ENCODE measurements at regions of chr17 and their contacts with region 1.

Region 1: DNA sequence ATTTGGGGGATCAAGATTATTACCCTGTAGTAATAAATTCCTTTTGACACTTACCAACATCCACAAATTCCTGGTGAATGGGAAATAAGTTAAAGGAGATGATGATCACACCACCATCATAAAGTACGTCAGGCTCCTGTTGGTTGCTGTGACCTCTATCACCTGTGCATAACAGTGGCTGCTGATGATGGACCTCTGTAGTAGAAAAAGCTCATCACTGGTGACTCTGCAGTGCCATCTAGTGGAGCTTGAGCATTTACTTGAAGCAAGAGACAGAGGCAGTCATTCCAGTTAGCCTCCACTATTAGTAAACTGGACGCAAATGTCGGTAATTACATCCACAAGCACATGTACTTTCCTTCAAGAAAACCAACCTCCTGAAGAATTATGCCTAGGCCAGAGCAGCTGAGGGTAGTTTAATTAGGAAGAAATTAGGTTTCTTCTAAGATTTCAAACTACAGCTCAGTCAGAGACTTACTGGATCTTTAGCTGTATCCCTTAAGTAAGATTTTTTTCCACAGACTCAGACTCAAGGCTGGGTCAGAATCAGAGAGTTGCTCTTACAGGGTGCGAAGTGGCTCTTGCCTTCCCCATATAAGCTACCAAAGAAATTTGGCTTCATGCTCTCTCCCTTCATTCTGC is 39.3 kb downstream of the CYB561 start:
- DNase-seq: peak; percentile 86
- ATAC-seq: peak; percentile 81
- H3K4me3 ChIP-seq: no peak overlapping the region
- H3K4me3 Mint-ChIP-seq: no peak overlapping the region
- H3K27ac ChIP-seq: no peak overlapping the region
- H3K27ac Mint-ChIP-seq: no peak overlapping the region
- H3K4me1 ChIP-seq: no peaks in the 10 kb centered on the region
- H3K4me1 Mint-ChIP-seq: peaks cover 2% of the 10 kb centered on the region
- H3K27me3 ChIP-seq: no peaks in the 10 kb centered on the region
- H3K27me3 Mint-ChIP-seq: no peaks in the 10 kb centered on the region
- CTCF ChIP-seq: peak; percentile 91

Region 2: GRCh38 chr17:62671583-62672312 is 735.1 kb before region 1 on chr17:
- CTCF ChIA-PET with region 1: interaction called, 30 read pairs
- POLR2A ChIA-PET with region 1: no interaction called
- intact Hi-C with region 1: no loop called
- DNase-seq: no peak
- ATAC-seq: no peak
- H3K4me3 ChIP-seq: no peak overlapping the region
- H3K4me3 Mint-ChIP-seq: no peak overlapping the region
- H3K27ac ChIP-seq: no peak overlapping the region
- H3K27ac Mint-ChIP-seq: no peak overlapping the region
- H3K4me1 ChIP-seq: no peaks in the 10 kb centered on the region
- H3K4me1 Mint-ChIP-seq: no peaks in the 10 kb centered on the region
- H3K27me3 ChIP-seq: no peaks in the 10 kb centered on the region
- H3K27me3 Mint-ChIP-seq: peaks cover 4% of the 10 kb centered on the region
- CTCF ChIP-seq: no peak

Region 3: DNA sequence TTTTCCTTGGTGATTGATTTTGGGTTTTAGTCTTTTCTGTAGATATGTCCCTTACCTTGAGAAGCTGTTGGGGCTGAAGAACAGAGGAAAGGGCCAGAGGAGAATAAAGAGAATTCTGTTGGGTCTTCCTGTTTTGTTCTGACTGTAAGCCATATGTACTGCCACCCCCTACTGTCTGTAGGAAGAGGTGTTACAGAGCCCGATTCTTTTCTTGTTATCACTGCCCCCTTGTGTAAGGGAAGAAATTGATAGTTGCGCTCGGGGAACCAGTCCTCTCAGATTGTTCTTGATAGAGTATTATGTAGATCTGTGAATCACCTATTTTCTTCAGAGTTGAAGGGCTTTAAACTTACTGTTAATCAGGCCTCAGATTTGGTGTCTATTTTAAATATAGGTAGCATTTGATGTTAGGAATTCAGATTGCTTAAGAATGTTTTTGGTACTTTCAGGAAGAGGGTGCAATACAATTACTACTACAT is 438.3 kb before region 1 on chr17:
- CTCF ChIA-PET with region 1: no interaction called
- POLR2A ChIA-PET with region 1: no interaction called
- intact Hi-C with region 1: loop called (anchors 1 kb)
- DNase-seq: peak; percentile 83
- ATAC-seq: peak; percentile 39
- H3K4me3 ChIP-seq: no peak overlapping the region
- H3K4me3 Mint-ChIP-seq: peak overlapping the region; percentile 74
- H3K27ac ChIP-seq: no peak overlapping the region
- H3K27ac Mint-ChIP-seq: peak overlapping the region; percentile 48
- H3K4me1 ChIP-seq: peaks cover 18 to 20% of the 10 kb centered on the region in 2 donors
- H3K4me1 Mint-ChIP-seq: peaks cover 21% of the 10 kb centered on the region
- H3K27me3 ChIP-seq: no peaks in the 10 kb centered on the region
- H3K27me3 Mint-ChIP-seq: no peaks in the 10 kb centered on the region
- CTCF ChIP-seq: peak; percentile 85

Region 4: GRCh38 chr17:63082273-63082993 is 324.4 kb before region 1 on chr17:
- CTCF ChIA-PET with region 1: interaction called, 88 read pairs
- POLR2A ChIA-PET with region 1: no interaction called
- intact Hi-C with region 1: loop called (anchors 1 kb)
- DNase-seq: peak; percentile 49
- ATAC-seq: no peak
- H3K4me3 ChIP-seq: no peak overlapping the region
- H3K4me3 Mint-ChIP-seq: no peak overlapping the region
- H3K27ac ChIP-seq: no peak overlapping the region
- H3K27ac Mint-ChIP-seq: no peak overlapping the region
- H3K4me1 ChIP-seq: no peaks in the 10 kb centered on the region
- H3K4me1 Mint-ChIP-seq: no peaks in the 10 kb centered on the region
- H3K27me3 ChIP-seq: no peaks in the 10 kb centered on the region
- H3K27me3 Mint-ChIP-seq: no peaks in the 10 kb centered on the region
- CTCF ChIP-seq: peak; percentile 66

Region 5: DNA sequence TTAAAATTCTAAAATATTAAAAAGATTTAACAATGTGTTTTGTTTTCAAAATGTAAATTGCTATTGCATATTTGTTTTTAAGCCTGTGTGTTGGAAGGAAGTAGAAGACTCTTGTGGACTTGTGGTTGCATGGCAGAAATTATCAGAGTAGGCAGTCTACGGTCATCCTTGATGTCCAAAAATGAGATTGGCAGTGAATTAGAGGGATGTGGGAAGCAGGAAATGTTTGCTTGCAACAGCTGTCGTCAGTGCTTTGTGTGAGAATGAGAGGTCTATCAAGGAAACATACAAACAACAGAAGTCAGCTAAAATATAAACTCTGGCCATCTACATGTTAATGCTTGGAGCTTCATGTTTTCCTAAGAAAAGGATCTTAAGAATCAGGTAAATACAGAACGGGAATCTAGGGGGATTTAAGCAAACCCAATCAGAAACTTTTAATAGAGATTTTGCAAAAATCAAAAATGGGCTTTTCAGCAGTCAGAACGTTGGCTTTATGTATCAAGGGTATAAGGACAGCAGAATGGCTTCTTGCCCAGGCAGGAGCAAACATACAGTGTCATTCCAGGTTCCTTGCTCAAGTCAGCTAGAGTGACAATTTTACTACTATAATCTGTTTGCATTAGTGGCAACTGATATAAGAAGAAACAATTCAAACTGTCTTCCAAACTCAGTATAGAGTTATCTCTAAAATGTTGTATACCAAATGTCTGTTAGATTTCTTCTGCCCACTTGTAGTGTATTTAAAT is 157.4 kb before region 1 on chr17:
- CTCF ChIA-PET with region 1: no interaction called
- POLR2A ChIA-PET with region 1: no interaction called
- intact Hi-C with region 1: no loop called
- DNase-seq: no peak
- ATAC-seq: no peak
- H3K4me3 ChIP-seq: no peak overlapping the region
- H3K4me3 Mint-ChIP-seq: no peak overlapping the region
- H3K27ac ChIP-seq: no peak overlapping the region
- H3K27ac Mint-ChIP-seq: no peak overlapping the region
- H3K4me1 ChIP-seq: no peaks in the 10 kb centered on the region
- H3K4me1 Mint-ChIP-seq: no peaks in the 10 kb centered on the region
- H3K27me3 ChIP-seq: no peaks in the 10 kb centered on the region
- H3K27me3 Mint-ChIP-seq: no peaks in the 10 kb centered on the region
- CTCF ChIP-seq: no peak

Region 6: GRCh38 chr17:63419949-63420867 is 13.4 kb after region 1 on chr17:
- CTCF ChIA-PET with region 1: interaction called, 13 read pairs
- POLR2A ChIA-PET with region 1: no interaction called
- intact Hi-C with region 1: no loop called
- DNase-seq: no peak
- ATAC-seq: no peak
- H3K4me3 ChIP-seq: no peak overlapping the region
- H3K4me3 Mint-ChIP-seq: no peak overlapping the region
- H3K27ac ChIP-seq: no peak overlapping the region
- H3K27ac Mint-ChIP-seq: no peak overlapping the region
- H3K4me1 ChIP-seq: peaks cover 0 to 2% of the 10 kb centered on the region in 2 donors
- H3K4me1 Mint-ChIP-seq: no peaks in the 10 kb centered on the region
- H3K27me3 ChIP-seq: no peaks in the 10 kb centered on the region
- H3K27me3 Mint-ChIP-seq: peaks cover 4% of the 10 kb centered on the region
- CTCF ChIP-seq: no peak

Measured in B cell (primary cell).